CD4-positive, alpha-beta memory T cell (primary cell): ENCODE measurements at regions of chr18 and their contacts with region 1.

Region 1: DNA sequence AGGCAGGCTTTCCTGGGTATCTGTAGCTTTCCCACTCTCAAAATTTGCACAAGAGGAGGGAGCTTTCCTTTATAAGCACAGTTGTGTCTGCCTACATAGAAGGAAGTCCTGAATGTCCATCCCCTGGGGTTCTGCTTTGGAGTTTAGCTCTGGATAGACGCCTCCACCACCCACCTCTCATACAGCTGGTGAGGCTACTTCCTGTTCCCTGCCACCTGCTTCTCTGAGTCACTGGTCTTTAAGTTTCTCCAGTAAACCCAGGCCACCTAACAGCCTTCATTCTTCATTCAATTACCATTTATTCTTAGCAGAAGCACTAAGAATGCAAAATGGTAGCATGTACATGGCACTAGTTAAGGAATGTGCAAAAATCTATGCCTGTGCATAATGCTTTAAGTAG is 407.8 kb downstream of the CDH2 start:
- DNase-seq: no peak
- H3K4me3 ChIP-seq: no peak overlapping the region
- H3K4me3 Mint-ChIP-seq: no peak overlapping the region
- H3K27ac ChIP-seq: no peak overlapping the region
- H3K27ac Mint-ChIP-seq: no peak overlapping the region
- H3K4me1 ChIP-seq: no peaks in the 10 kb centered on the region
- H3K4me1 Mint-ChIP-seq: no peaks in the 10 kb centered on the region
- H3K27me3 ChIP-seq: no peaks in the 10 kb centered on the region
- H3K27me3 Mint-ChIP-seq: no peaks in the 10 kb centered on the region

Region 2: DNA sequence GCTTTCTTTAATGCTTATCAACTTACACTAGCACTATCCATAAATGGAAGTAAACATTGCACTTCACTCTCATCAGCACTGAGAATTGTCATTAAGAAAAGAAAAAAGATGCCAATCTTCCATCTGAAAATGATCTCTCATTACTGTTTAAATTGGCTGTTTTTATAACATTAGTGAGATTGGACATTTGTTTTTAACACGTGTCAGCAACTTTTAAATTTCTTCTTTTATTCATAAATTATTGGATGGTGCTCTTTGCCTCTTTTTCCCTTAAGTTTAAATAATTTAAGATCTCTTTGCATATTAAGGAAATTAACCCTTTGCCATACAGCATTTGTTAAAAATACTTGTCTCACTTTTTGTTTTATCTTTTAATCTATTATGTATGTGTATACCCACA is 437.5 kb before region 1 on chr18:
- CTCF ChIA-PET with region 1: no interaction called
- POLR2A ChIA-PET with region 1: no interaction called
- intact Hi-C with region 1: no loop called
- DNase-seq: no peak
- H3K4me3 ChIP-seq: no peak overlapping the region
- H3K4me3 Mint-ChIP-seq: no peak overlapping the region
- H3K27ac ChIP-seq: no peak overlapping the region
- H3K27ac Mint-ChIP-seq: peak overlapping the region in 1 of 7 donors; percentile 41
- H3K4me1 ChIP-seq: no peaks in the 10 kb centered on the region
- H3K4me1 Mint-ChIP-seq: no peaks in the 10 kb centered on the region
- H3K27me3 ChIP-seq: no peaks in the 10 kb centered on the region
- H3K27me3 Mint-ChIP-seq: no peaks in the 10 kb centered on the region

Region 3: DNA sequence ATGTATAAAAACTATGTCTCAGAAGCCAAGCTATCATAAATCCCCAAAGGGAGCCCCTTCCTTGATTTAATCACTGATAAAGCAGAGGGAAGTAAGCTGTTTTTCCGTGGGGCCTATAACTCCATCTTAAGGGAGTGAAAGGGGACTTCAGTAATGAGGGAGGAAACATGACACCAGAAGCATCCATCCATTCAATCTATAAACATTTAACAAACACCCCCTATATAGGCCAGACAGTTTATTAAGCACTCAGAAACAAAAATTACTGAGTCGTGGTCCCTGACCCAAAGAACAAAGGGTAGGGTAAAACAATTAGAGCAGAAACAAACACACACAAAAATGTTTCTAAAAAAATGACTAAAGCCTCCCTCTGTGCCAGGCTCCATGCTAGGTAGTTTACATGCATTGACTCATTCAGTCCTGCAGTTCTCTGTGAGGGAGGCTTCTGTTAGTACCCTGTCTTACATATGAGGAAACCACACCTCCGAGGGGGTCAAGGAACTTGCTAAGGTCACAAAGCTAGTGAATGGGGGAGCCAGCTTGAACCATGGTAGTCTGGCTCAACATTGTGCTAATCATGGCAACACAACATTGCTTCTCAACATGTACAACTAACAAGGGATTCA is 64.3 kb before region 1 on chr18:
- CTCF ChIA-PET with region 1: no interaction called
- POLR2A ChIA-PET with region 1: no interaction called
- intact Hi-C with region 1: loop called (anchors 10 kb)
- DNase-seq: no peak
- H3K4me3 ChIP-seq: no peak overlapping the region
- H3K4me3 Mint-ChIP-seq: no peak overlapping the region
- H3K27ac ChIP-seq: no peak overlapping the region
- H3K27ac Mint-ChIP-seq: no peak overlapping the region
- H3K4me1 ChIP-seq: no peaks in the 10 kb centered on the region
- H3K4me1 Mint-ChIP-seq: no peaks in the 10 kb centered on the region
- H3K27me3 ChIP-seq: no peaks in the 10 kb centered on the region
- H3K27me3 Mint-ChIP-seq: no peaks in the 10 kb centered on the region